Mammary epithelial cell (primary cell): ENCODE measurements at regions of chr5 and their contacts with region 1.

Region 1: GRCh38 chr5:77924081-77924480 is 147.9 kb upstream of the TBCA start:
- DNase-seq: peak; percentile 81
- H3K4me3 ChIP-seq: no peak overlapping the region
- H3K27ac ChIP-seq: peak overlapping the region; percentile 27
- H3K4me1 ChIP-seq: peaks cover 15% of the 10 kb centered on the region
- H3K27me3 ChIP-seq: no peaks in the 10 kb centered on the region
- CTCF ChIP-seq: no peak

Region 2: GRCh38 chr5:77832166-77832770 is 91.8 kb before region 1 on chr5:
- CTCF ChIA-PET with region 1: no interaction called
- dilution Hi-C with region 1: no loop called
- in situ Hi-C with region 1: no loop called
- intact Hi-C with region 1: no loop called
- DNase-seq: peak; percentile 9
- H3K4me3 ChIP-seq: no peak overlapping the region
- H3K27ac ChIP-seq: no peak overlapping the region
- H3K4me1 ChIP-seq: no peaks in the 10 kb centered on the region
- H3K27me3 ChIP-seq: no peaks in the 10 kb centered on the region
- CTCF ChIP-seq: no peak

Region 3: GRCh38 chr5:77882670-77883257 is 41.3 kb before region 1 on chr5:
- CTCF ChIA-PET with region 1: interaction called, 6 read pairs
- dilution Hi-C with region 1: no loop called
- in situ Hi-C with region 1: no loop called
- intact Hi-C with region 1: loop called (anchors 5 kb)
- DNase-seq: peak; percentile 82
- H3K4me3 ChIP-seq: no peak overlapping the region
- H3K27ac ChIP-seq: peak overlapping the region; percentile 50
- H3K4me1 ChIP-seq: peaks cover 39% of the 10 kb centered on the region
- H3K27me3 ChIP-seq: no peaks in the 10 kb centered on the region
- CTCF ChIP-seq: no peak